Activated CD4-positive, alpha-beta T cell treated with anti-CD3 and anti-CD28 coated beads for 36 hours (primary cell): ENCODE measurements at regions of chr4 and their contacts with region 1.

Region 1: DNA sequence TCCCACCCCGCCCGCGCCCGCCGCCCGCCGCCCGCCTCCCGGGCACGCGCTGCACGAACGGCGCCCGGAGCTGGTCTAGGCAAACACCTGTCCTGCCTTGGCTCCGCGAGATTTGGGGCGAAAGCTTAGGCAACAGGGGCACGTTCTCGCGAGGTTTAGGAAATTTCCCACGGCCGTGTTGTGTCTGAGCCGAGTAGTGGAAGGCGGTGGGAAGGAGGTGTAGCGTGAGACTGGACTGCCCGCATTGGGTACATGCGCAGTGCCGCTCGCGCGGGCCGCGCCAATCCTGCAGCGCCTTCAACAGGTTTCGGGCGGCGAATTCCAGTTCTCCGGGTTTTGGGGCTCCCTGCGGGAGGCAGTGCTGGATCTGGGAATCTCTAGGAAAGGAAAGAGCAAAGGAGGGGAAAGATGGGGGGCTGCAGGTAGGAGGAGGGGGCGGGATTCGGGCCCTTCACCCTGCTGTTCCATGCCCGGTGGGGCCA is 1.3 kb upstream of the RBPJ start:
- DNase-seq: peak; percentile 99
- ATAC-seq: peak; percentile 72
- H3K4me3 Mint-ChIP-seq: peak overlapping the region; percentile 99
- H3K27ac Mint-ChIP-seq: peak overlapping the region; percentile 97
- H3K4me1 Mint-ChIP-seq: peaks cover 37% of the 10 kb centered on the region
- H3K27me3 Mint-ChIP-seq: no peaks in the 10 kb centered on the region

Region 2: DNA sequence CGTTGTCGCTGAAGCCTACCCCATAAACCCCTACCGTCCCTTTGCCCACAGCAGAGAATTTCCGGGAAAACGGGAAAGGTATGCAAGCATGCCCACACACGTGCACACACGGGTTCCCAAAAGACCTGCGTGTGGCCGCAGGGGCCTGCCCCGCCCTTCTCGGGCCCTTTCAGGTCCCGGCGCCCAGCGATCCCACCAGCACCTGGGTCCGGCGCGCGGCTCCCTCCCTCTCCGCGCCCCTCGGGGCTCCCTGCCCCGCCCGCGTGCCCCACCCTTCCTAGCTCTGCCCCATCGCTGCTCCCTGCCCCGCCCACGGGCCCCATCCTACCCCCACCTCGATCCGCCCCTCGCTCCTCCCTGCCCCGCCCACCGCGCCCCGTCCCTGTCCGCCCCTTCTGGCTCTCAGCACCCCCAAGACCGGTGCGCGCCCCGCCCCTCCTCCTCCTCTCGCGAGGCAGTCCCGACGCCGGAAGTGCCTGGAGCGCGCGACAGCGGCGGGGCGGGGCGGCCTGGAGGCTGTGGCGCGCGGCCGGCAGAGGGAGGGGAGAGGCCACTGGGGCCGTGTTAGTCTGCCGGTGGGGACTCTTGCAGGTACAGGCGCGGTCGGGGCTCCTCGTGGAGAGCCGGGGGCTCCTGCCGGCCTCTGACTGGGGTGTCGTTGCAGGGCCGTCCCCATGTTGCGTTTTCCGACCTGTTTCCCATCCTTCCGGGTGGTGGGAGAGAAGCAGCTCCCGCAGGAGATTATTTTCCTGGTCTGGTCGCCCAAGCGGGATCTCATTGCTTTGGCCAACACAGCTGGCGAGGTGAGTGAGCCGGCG is 942.5 kb before region 1 on chr4 and contains the start of gene ANAPC4:
- CTCF ChIA-PET with region 1: no interaction called
- POLR2A ChIA-PET with region 1: no interaction called
- intact Hi-C with region 1: loop called in 1 of 2 experiments (anchors 5 kb)
- DNase-seq: peak; percentile 99
- ATAC-seq: peak; percentile 98
- H3K4me3 Mint-ChIP-seq: no peak within 1 kb of the TSS
- H3K27ac Mint-ChIP-seq: peak within 1 kb of the TSS; percentile 74
- H3K4me1 Mint-ChIP-seq: peaks cover 8% of the 10 kb centered on the region
- H3K27me3 Mint-ChIP-seq: no peaks in the 10 kb centered on the region
- total RNA-seq, gene ANAPC4: 19.2 to 31.2 TPM

Region 3: GRCh38 chr4:25913851-25914669 is 405.4 kb before region 1 on chr4 and contains the start of gene SMIM20:
- CTCF ChIA-PET with region 1: no interaction called
- POLR2A ChIA-PET with region 1: no interaction called
- intact Hi-C with region 1: loop called (anchors 1 to 5 kb)
- DNase-seq: peak; percentile 94
- ATAC-seq: peak; percentile 96
- H3K4me3 Mint-ChIP-seq: peak within 1 kb of the TSS; percentile 93
- H3K27ac Mint-ChIP-seq: peak within 1 kb of the TSS; percentile 93
- H3K4me1 Mint-ChIP-seq: peaks cover 22% of the 10 kb centered on the region
- H3K27me3 Mint-ChIP-seq: no peaks in the 10 kb centered on the region
- total RNA-seq, gene SMIM20: 15.6 to 23.0 TPM

Region 4: GRCh38 chr4:25966171-25966570 is 353.3 kb before region 1 on chr4:
- CTCF ChIA-PET with region 1: no interaction called
- POLR2A ChIA-PET with region 1: no interaction called
- intact Hi-C with region 1: no loop called
- DNase-seq: no peak
- ATAC-seq: no peak
- H3K4me3 Mint-ChIP-seq: no peak overlapping the region
- H3K27ac Mint-ChIP-seq: no peak overlapping the region
- H3K4me1 Mint-ChIP-seq: no peaks in the 10 kb centered on the region
- H3K27me3 Mint-ChIP-seq: peaks cover 10% of the 10 kb centered on the region

Region 5: GRCh38 chr4:25993395-25994185 is 325.9 kb before region 1 on chr4:
- CTCF ChIA-PET with region 1: no interaction called
- POLR2A ChIA-PET with region 1: no interaction called
- intact Hi-C with region 1: loop called (anchors 1 kb)
- DNase-seq: peak; percentile 59
- ATAC-seq: peak; percentile 79
- H3K4me3 Mint-ChIP-seq: no peak overlapping the region
- H3K27ac Mint-ChIP-seq: no peak overlapping the region
- H3K4me1 Mint-ChIP-seq: peaks cover 10% of the 10 kb centered on the region
- H3K27me3 Mint-ChIP-seq: peaks cover 2% of the 10 kb centered on the region

Region 6: DNA sequence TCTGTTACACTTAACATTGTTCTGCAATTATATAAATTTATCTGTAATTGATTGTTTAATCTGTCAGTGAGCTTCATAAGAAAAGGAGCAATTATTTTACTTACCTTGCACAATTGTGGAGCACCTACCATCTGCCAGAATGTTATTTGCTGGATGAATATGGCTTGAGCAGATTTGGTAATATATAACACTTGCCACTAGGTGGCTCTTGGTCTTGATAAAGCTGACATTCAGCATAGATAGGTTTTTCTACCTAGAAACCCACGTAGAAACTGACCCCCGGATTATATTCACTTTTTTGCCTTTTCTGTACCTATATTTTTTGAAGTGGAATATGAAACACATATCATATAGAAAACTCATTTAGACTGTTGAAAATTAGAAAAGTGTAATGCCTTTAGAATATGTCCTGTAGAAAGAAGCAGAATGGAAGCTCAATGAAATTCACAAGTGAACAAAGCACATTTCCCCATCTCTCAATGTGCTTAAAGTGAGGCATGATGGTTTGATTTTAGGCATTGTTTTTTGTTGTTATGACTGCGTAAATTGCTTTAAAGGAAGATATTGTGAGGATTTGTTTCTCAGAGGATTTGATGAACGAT is 10.8 kb after region 1 on chr4:
- CTCF ChIA-PET with region 1: interaction called, 14 read pairs
- POLR2A ChIA-PET with region 1: no interaction called
- intact Hi-C with region 1: no loop called
- DNase-seq: no peak
- ATAC-seq: peak; percentile 80
- H3K4me3 Mint-ChIP-seq: no peak overlapping the region
- H3K27ac Mint-ChIP-seq: peak overlapping the region; percentile 49
- H3K4me1 Mint-ChIP-seq: peaks cover 48% of the 10 kb centered on the region
- H3K27me3 Mint-ChIP-seq: no peaks in the 10 kb centered on the region

Region 7: DNA sequence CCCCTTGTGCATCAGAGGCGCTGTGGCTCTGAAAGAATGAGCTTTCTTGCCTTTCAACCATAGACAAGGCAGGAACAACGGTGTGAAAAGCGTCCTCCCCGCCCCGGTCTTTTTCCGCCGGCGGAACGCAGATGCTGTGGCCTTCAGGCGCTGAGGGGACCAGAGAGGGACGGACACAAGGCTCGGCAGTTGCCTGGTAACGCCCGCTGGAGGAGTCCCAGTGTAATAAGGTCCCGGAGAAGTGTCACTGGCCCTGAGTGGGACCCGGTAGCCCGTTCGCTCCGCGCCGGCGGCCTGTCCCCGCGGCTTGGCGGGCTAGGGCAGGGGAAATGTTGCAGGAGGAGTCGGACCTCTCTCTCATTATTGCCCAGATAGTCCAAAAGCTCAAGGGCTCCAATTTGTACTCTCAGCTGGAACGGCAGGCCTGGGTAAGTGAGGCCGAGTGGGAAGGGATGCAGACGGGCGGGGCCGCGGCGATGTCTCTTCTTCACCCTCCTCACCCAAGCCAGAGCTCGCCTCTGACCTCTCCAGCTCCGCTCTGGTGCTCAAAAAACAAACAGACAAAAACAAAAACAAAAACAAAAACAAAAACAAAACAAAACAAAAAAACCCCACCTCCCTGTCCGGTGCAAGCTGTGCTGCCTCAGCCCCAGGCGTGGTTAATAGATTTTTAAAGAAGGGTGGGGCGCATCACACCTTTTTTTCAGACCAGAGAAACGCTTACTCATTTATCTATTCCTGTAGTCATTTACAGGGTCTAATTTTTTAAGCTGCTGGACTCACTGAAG is 264.6 kb after region 1 on chr4 and contains the start of gene TBC1D19:
- CTCF ChIA-PET with region 1: interaction called, 3 read pairs
- POLR2A ChIA-PET with region 1: no interaction called
- intact Hi-C with region 1: loop called in 1 of 2 experiments (anchors 2 kb)
- DNase-seq: peak; percentile 93
- ATAC-seq: peak; percentile 96
- H3K4me3 Mint-ChIP-seq: peak within 1 kb of the TSS; percentile 93
- H3K27ac Mint-ChIP-seq: peak within 1 kb of the TSS; percentile 92
- H3K4me1 Mint-ChIP-seq: peaks cover 24% of the 10 kb centered on the region
- H3K27me3 Mint-ChIP-seq: peaks cover 1% of the 10 kb centered on the region
- total RNA-seq, gene TBC1D19: 5.0 to 5.3 TPM

Region 8: GRCh38 chr4:27010334-27010940 is 690.9 kb after region 1 on chr4:
- CTCF ChIA-PET with region 1: no interaction called
- POLR2A ChIA-PET with region 1: no interaction called
- intact Hi-C with region 1: loop called in 1 of 2 experiments (anchors 5 kb)
- DNase-seq: peak; percentile 77
- ATAC-seq: peak; percentile 76
- H3K4me3 Mint-ChIP-seq: no peak overlapping the region
- H3K27ac Mint-ChIP-seq: no peak overlapping the region
- H3K4me1 Mint-ChIP-seq: peaks cover 24% of the 10 kb centered on the region
- H3K27me3 Mint-ChIP-seq: no peaks in the 10 kb centered on the region